Endothelial cell of umbilical vein (primary cell): ENCODE measurements at regions of chr6 and their contacts with region 1.

Region 1: GRCh38 chr6:13614926-13615798 is at the start of gene NOL7:
- DNase-seq: peak; percentile 98
- H3K4me3 ChIP-seq: peak within 1 kb of the TSS; percentile 89 to 99 (median 98)
- H3K27ac ChIP-seq: peak within 1 kb of the TSS; percentile 78
- H3K4me1 ChIP-seq: peaks cover 17% of the 10 kb centered on the region
- H3K27me3 ChIP-seq: no peaks in the 10 kb centered on the region
- CTCF ChIP-seq: peak; percentile 97 to 98
- POLR2A ChIP-seq: peak; percentile 67
- total RNA-seq, gene NOL7: 75.6 and 80.0 TPM in 2 replicates

Region 2: DNA sequence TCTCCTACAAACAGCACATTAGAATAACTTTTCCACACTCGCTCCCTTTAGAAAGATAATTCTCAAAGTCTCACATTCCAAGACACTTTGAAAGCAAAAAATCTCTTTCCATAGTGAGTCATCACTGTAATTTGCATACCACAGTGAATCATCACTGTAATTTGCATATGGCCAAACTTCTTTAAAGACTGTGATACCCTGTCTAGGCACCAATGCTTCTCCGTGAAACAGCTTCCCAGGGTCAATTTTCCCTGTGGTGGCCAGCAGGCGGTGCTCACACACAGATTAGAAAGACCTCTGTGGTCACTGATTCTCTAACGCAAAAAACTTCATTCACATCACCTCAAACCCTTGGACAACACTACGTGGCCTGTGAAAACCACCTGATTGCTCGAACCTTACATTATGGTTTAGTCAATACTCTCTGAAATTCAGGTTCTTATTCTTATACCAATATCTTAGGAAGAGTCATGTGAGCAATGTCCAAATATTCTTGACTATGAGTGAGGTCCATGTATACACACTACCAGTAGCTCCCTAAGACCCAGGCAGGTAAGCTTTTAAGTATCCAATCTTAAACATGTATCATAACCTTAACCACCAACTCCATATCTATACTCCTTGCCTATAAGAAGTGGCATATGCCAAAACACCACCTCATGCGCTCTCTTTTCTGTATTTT is 977.1 kb before region 1 on chr6:
- CTCF ChIA-PET with region 1: no interaction called
- POLR2A ChIA-PET with region 1: no interaction called
- dilution Hi-C with region 1: no loop called
- intact Hi-C with region 1: loop called (anchors 10 kb)
- DNase-seq: peak; percentile 67
- H3K4me3 ChIP-seq: no peak overlapping the region
- H3K27ac ChIP-seq: no peak overlapping the region
- H3K4me1 ChIP-seq: no peaks in the 10 kb centered on the region
- H3K27me3 ChIP-seq: peaks cover 0 to 2% of the 10 kb centered on the region in 2 experiments
- CTCF ChIP-seq: peak; percentile 78 to 81
- POLR2A ChIP-seq: no peak

Region 3: DNA sequence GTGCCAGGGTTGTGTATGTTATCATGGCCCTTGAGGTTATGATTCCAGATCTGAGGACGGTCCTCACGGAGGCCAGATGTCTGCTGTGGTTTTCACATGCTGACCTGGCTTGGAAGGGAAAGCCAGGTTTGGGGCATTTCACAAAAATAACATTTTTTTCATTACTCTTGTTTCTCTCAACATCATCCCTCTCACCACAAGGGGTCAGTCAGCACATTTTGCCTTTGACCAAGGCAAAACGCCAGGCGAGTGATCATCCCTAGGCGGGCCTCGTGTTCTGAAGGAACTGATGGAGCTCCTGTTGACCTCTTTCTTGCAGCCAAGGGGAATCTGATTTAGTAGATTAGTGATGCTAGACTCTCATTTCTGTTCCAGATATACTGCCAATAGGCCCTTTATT is 420.3 kb before region 1 on chr6:
- CTCF ChIA-PET with region 1: interaction called, 3 read pairs
- POLR2A ChIA-PET with region 1: no interaction called
- dilution Hi-C with region 1: no loop called
- intact Hi-C with region 1: loop called (anchors 1 kb)
- DNase-seq: peak; percentile 69
- H3K4me3 ChIP-seq: no peak overlapping the region
- H3K27ac ChIP-seq: no peak overlapping the region
- H3K4me1 ChIP-seq: no peaks in the 10 kb centered on the region
- H3K27me3 ChIP-seq: no peaks in the 10 kb centered on the region
- CTCF ChIP-seq: peak; percentile 51 to 72
- POLR2A ChIP-seq: no peak

Region 4: GRCh38 chr6:13328076-13328874 is 286.9 kb before region 1 on chr6 and contains the start of gene TBC1D7:
- CTCF ChIA-PET with region 1: interaction called, 12 read pairs
- POLR2A ChIA-PET with region 1: interaction called, 4 read pairs
- dilution Hi-C with region 1: no loop called
- intact Hi-C with region 1: loop called (anchors 1 kb)
- DNase-seq: peak; percentile 94
- H3K4me3 ChIP-seq: peak within 1 kb of the TSS; percentile 76 to 92 (median 87)
- H3K27ac ChIP-seq: peak within 1 kb of the TSS; percentile 92
- H3K4me1 ChIP-seq: peaks cover 16% of the 10 kb centered on the region
- H3K27me3 ChIP-seq: no peaks in the 10 kb centered on the region
- CTCF ChIP-seq: no peak
- POLR2A ChIP-seq: peak; percentile 94
- total RNA-seq, gene TBC1D7: 26.6 and 28.1 TPM in 2 replicates

Region 5: DNA sequence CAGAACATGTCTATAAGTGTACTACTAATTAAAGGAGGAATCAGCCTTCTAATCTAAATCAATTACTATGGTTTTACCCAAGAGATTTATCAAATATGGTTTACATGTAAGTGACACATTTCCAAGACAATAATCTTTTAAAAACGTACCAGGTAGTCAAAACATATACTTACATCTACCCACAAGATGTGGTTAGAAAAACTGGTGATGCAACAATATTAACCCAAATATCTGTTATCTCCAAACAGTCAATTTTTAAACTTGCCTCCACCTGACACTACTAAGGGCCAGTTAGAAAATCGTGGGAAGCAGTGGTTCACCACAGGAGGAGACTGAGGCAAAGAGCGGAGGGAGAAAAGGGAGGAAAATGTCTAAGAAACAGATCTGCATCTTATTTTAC is 28.0 kb after region 1 on chr6:
- CTCF ChIA-PET with region 1: no interaction called
- POLR2A ChIA-PET with region 1: no interaction called
- dilution Hi-C with region 1: no loop called
- intact Hi-C with region 1: no loop called
- DNase-seq: no peak
- H3K4me3 ChIP-seq: no peak overlapping the region
- H3K27ac ChIP-seq: no peak overlapping the region
- H3K4me1 ChIP-seq: no peaks in the 10 kb centered on the region
- H3K27me3 ChIP-seq: no peaks in the 10 kb centered on the region
- CTCF ChIP-seq: no peak
- POLR2A ChIP-seq: no peak

Region 6: DNA sequence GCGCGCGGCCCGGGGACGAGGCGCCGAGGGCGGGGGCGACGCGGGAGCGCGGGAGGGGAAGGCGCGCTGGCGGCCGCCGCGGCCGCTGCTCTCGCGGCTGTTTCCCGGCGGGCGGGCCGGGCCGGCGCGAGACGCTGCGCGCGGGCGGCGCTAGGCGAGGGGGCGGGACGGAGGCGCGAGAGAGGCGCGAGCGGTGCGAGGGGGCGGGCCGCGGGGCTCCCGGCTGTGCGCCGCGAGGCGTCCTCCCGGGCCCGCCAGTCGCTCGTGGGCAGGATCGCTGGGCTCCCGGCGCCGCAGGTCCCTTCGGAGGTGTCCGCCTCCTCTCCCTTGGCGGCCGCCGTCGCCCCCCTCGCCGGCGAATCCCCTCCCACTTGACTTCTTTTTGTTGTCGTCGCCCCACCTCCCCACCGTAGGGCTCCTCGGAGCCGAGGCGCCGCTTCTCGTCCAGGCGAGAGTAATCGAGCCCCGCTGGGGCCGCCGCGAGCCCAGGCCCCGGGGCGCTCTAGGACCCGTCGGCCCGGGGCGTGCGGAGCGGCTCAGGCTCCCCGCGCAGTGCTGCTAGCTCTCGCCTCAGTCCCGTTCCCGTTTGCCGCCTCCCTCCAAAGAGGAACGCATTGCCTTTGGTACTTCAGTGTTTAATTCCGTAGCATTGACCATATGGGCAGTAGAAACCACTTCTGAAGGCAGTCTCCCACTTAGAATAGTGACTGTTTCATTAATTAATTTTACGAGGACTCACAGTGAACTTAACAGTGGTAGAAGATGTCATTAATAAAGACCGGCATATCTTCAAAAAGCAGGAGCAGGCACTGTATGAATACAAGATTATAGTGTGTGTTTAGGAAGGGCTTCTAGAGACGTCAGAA is 96.8 kb after region 1 on chr6 and contains the start of gene RANBP9:
- CTCF ChIA-PET with region 1: interaction called, 15 read pairs
- POLR2A ChIA-PET with region 1: no interaction called
- dilution Hi-C with region 1: no loop called
- intact Hi-C with region 1: loop called (anchors 1 kb)
- DNase-seq: peak; percentile 90
- H3K4me3 ChIP-seq: peak within 1 kb of the TSS; percentile 79 to 99 (median 95)
- H3K27ac ChIP-seq: peak within 1 kb of the TSS; percentile 74
- H3K4me1 ChIP-seq: peaks cover 25% of the 10 kb centered on the region
- H3K27me3 ChIP-seq: no peaks in the 10 kb centered on the region
- CTCF ChIP-seq: no peak
- POLR2A ChIP-seq: peak; percentile 75
- total RNA-seq, gene RANBP9: 40.2 and 44.4 TPM in 2 replicates